H1 (cell line): ENCODE measurements at regions of chr2 and their contacts with region 1.

Region 1: DNA sequence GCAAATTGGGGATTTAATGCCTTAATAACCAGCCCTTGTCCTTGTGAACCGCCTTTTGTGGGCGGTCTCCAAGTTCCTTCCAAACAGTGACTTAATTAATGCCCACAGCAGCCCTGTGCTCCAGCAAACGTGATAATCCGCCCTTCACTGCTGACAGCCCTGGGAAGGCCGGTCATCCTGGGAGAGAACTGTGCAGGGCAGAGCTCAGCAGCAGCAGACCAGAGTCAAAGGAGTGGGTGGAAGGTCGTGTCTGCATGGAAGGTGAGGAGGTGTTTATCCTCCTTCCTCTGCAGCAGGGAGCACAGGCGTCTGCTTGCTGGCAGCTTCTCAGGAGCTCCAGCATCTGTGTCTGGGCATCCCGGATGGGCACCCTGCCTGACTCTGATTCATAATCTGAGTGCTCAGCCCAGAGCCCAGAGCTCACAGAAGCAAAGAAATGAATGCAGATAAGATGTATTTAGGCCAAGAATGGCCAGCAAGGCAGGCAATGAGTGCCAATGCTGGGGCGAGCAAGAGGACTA is 270.0 kb upstream of the PXDN start:
- DNase-seq: no peak
- H3K4me3 ChIP-seq: no peak overlapping the region
- H3K27ac ChIP-seq: no peak overlapping the region
- H3K4me1 ChIP-seq: peaks cover 0 to 13% (median 7%) of the 10 kb centered on the region in 4 experiments
- H3K27me3 ChIP-seq: peaks cover 0 to 3% (median 0%) of the 10 kb centered on the region in 4 experiments; a peak in 1 of 7 replicates
- CTCF ChIP-seq: no peak
- EP300 ChIP-seq: no peak
- POLR2A ChIP-seq: no peak
- RAD21 ChIP-seq: no peak

Region 2: DNA sequence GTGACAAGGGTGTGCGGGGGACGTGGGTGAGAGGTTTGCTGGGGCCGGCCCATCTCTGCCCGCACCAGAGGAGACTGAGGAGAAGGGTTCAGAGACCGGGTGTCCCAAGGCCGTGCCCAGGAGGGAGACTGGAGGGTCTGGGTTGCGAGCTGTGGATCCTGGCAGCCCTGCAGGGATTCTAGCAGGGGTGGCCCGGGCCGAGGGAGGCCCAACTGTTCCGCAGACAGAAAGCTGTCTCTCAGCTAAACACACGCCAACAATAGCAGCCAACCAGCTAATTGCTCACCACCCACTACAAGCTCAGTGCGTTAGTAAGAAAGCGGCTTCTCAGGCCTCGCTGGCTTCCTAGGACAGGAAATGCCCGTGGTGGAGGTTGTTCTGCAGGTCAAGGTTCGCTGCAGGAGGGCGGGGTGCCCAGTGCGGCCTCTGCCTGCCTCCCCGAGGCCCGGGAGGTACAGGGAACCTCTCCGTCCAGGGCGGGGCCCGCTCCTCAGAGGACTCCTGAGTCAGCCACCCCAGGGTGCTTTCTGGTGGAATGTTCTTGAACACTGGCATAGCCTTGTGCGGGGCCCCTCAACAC is 12.0 kb after region 1 on chr2:
- CTCF ChIA-PET with region 1: interaction called, 13 read pairs
- POLR2A ChIA-PET with region 1: no interaction called
- DNase-seq: no peak
- H3K4me3 ChIP-seq: no peak overlapping the region
- H3K27ac ChIP-seq: no peak overlapping the region
- H3K4me1 ChIP-seq: peaks cover 2 to 12% (median 6%) of the 10 kb centered on the region in 4 experiments; a peak in 5 of 7 replicates
- H3K27me3 ChIP-seq: no peaks in the 10 kb centered on the region
- CTCF ChIP-seq: no peak
- EP300 ChIP-seq: no peak
- POLR2A ChIP-seq: no peak
- RAD21 ChIP-seq: no peak